ENCODE measurements at regions of chr3 and their contacts with region 1.

Region 1: GRCh38 chr3:112984485-112984884 is 6.3 kb upstream of the GTPBP8 start:
- DNase-seq: no peak
- CTCF ChIP-seq: no peak

Region 2: GRCh38 chr3:112642912-112643506 is 341.5 kb before region 1 on chr3:
- in situ Hi-C with region 1: loop called (anchors 10 kb)
- DNase-seq: peak; percentile 83
- CTCF ChIP-seq: peak; percentile 88